Lower leg skin (tissue), 4 donors: ENCODE measurements at regions of chr7 and their contacts with region 1.

Region 1: GRCh38 chr7:135597926-135598305 is 40.2 kb downstream of the NUP205 start:
- DNase-seq: no peak
- H3K4me3 ChIP-seq: no peak overlapping the region
- CTCF ChIP-seq: no peak
- POLR2A ChIP-seq: no peak

Region 2: GRCh38 chr7:135441791-135442190 is 156.1 kb before region 1 on chr7:
- intact Hi-C with region 1: loop called (anchors 5 kb)
- DNase-seq: no peak
- H3K4me3 ChIP-seq: no peak overlapping the region
- CTCF ChIP-seq: no peak
- POLR2A ChIP-seq: no peak